Caco-2 (cell line): ENCODE measurements at regions of chr9 and their contacts with region 1.

Region 1: GRCh38 chr9:22008736-22009562 is at the start of gene CDKN2B:
- DNase-seq: peak; percentile 94 to 96
- H3K4me3 ChIP-seq: peak within 1 kb of the TSS; percentile 91
- H3K4me3 Mint-ChIP-seq: peak within 1 kb of the TSS; percentile 100
- H3K27ac Mint-ChIP-seq: peak within 1 kb of the TSS; percentile 51
- H3K4me1 ChIP-seq: no peaks in the 10 kb centered on the region
- H3K4me1 Mint-ChIP-seq: no peaks in the 10 kb centered on the region
- H3K27me3 ChIP-seq: no peaks in the 10 kb centered on the region
- H3K27me3 Mint-ChIP-seq: no peaks in the 10 kb centered on the region
- CTCF ChIP-seq: peak; percentile 53 to 79
- total RNA-seq, gene CDKN2B: 7.6 and 8.2 TPM in 2 replicates

Region 2: DNA sequence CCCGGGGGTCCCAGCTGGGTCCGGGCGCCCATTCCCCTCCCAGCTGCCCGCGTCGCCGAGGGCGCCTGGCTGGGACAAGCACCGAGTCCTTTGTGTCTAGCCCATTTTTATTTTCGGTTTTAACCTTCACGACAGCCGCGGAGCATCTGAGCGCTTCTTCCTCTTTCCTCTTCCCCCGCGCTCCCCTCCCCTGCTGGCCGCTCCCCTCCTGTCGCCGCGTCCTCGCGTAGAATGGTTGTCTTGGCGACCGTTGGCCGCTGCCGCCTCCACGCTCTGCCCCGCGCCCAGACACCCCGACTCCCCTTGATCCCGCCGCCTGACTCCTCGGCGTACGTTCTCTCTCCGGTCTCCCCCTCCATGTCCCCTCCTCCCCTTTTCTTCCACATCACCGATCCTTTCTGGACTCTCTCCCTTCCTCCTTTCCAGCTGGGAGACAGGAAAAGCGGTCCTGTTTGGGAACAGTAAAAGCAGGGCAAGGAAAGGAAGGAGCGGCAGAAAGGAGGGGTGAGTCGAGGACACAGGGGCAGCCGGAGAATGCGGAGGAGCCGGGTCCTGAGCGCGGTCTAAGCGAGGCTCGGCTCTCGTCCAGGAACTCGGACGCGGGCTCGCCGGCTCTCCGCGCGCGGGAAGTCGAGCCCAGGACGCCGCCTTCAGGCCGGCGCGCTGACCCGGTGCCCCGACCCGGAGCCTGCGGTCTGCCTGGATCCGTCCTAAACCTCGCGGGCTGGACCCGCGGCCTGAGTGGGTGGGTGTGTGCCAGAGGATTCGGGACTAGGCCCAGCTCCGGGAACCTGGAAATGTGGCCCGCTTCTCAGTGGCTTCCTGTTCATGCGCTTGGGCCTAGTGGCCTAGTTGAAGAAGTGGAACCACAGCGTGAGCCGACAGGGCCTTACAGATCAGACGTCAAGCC is 13.5 kb before region 1 on chr9:
- CTCF ChIA-PET with region 1: interaction called, 13 read pairs
- POLR2A ChIA-PET with region 1: interaction called, 9 read pairs
- intact Hi-C with region 1: loop called (anchors 1 kb)
- DNase-seq: peak; percentile 75 to 77
- H3K4me3 ChIP-seq: peak overlapping the region; percentile 60
- H3K4me3 Mint-ChIP-seq: peak overlapping the region; percentile 86
- H3K27ac Mint-ChIP-seq: peak overlapping the region; percentile 90
- H3K4me1 ChIP-seq: peaks cover 3% of the 10 kb centered on the region; the same call in 1 of the 2 replicates
- H3K4me1 Mint-ChIP-seq: peaks cover 9% of the 10 kb centered on the region
- H3K27me3 ChIP-seq: no peaks in the 10 kb centered on the region
- H3K27me3 Mint-ChIP-seq: no peaks in the 10 kb centered on the region
- CTCF ChIP-seq: peak; percentile 16 to 23

Region 3: DNA sequence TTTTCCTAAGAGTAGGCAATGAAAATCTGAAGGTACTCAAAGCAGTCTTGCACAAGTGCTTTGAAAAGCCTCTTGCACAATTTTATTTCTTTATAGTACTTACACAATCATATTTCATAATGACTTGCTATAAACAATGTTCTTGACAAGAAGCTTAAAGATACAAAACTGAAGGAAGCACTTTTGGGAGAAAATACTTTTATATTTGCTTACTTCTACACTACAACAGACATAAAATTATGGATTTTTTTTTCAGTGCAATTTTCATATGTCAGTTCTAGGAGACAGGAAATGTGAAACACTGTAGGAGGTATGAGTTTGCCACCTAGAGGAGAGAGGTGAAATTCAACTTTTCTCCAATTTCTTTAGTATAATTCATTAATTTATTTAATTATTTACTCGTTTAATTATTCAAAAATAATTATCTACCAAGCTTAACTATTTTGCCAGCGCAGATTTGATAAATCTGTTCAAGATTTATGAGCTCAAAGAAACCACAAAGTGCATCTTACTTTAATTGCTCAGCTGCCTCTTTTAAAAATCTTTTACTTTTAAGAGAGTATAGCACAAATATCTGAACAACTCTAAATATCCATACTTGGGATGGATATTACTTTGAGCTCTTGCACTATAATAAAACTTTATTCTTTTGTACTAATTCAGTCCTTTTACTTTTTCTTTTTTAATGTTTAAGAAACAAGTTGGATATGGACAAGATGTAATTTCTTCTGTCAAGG is 29.2 kb after region 1 on chr9:
- CTCF ChIA-PET with region 1: interaction called, 7 read pairs
- POLR2A ChIA-PET with region 1: interaction called, 3 read pairs
- intact Hi-C with region 1: loop called (anchors 2 kb)
- DNase-seq: no peak
- H3K4me3 ChIP-seq: no peak overlapping the region
- H3K4me3 Mint-ChIP-seq: no peak overlapping the region
- H3K27ac Mint-ChIP-seq: no peak overlapping the region
- H3K4me1 ChIP-seq: peaks cover 14% of the 10 kb centered on the region
- H3K4me1 Mint-ChIP-seq: no peaks in the 10 kb centered on the region
- H3K27me3 ChIP-seq: no peaks in the 10 kb centered on the region
- H3K27me3 Mint-ChIP-seq: no peaks in the 10 kb centered on the region
- CTCF ChIP-seq: peak; percentile 26 to 43

Region 4: GRCh38 chr9:22107147-22108045 is 98.4 kb after region 1 on chr9:
- CTCF ChIA-PET with region 1: interaction called, 4 read pairs
- POLR2A ChIA-PET with region 1: interaction called, 6 read pairs
- intact Hi-C with region 1: loop called (anchors 2 kb)
- DNase-seq: peak in 1 of 2 experiments; percentile 49
- H3K4me3 ChIP-seq: no peak overlapping the region
- H3K4me3 Mint-ChIP-seq: no peak overlapping the region
- H3K27ac Mint-ChIP-seq: no peak overlapping the region
- H3K4me1 ChIP-seq: peaks cover 55% of the 10 kb centered on the region
- H3K4me1 Mint-ChIP-seq: peaks cover 37% of the 10 kb centered on the region
- H3K27me3 ChIP-seq: no peaks in the 10 kb centered on the region
- H3K27me3 Mint-ChIP-seq: no peaks in the 10 kb centered on the region
- CTCF ChIP-seq: no peak

Region 5: GRCh38 chr9:22238809-22239684 is 230.1 kb after region 1 on chr9:
- CTCF ChIA-PET with region 1: no interaction called
- POLR2A ChIA-PET with region 1: no interaction called
- intact Hi-C with region 1: loop called (anchors 1 kb)
- DNase-seq: no peak
- H3K4me3 ChIP-seq: no peak overlapping the region
- H3K4me3 Mint-ChIP-seq: no peak overlapping the region
- H3K27ac Mint-ChIP-seq: peak overlapping the region; percentile 56
- H3K4me1 ChIP-seq: peaks cover 20% of the 10 kb centered on the region
- H3K4me1 Mint-ChIP-seq: peaks cover 17% of the 10 kb centered on the region
- H3K27me3 ChIP-seq: no peaks in the 10 kb centered on the region
- H3K27me3 Mint-ChIP-seq: peaks cover 6% of the 10 kb centered on the region
- CTCF ChIP-seq: peak; percentile 10 to 39